GM12878 (cell line): ENCODE measurements at regions of chr16 and their contacts with region 1.

Region 1: GRCh38 chr16:23858542-23858941 is 22.8 kb downstream of the PRKCB start:
- DNase-seq: no peak
- ATAC-seq: no peak
- H3K4me3 ChIP-seq: no peak overlapping the region
- H3K27ac ChIP-seq: peak overlapping the region; percentile 83
- H3K4me1 ChIP-seq: peaks cover 89% of the 10 kb centered on the region
- H3K27me3 ChIP-seq: no peaks in the 10 kb centered on the region
- CTCF ChIP-seq: no peak
- EP300 ChIP-seq: no peak
- POLR2A ChIP-seq: no peak
- RAD21 ChIP-seq: no peak

Region 2: DNA sequence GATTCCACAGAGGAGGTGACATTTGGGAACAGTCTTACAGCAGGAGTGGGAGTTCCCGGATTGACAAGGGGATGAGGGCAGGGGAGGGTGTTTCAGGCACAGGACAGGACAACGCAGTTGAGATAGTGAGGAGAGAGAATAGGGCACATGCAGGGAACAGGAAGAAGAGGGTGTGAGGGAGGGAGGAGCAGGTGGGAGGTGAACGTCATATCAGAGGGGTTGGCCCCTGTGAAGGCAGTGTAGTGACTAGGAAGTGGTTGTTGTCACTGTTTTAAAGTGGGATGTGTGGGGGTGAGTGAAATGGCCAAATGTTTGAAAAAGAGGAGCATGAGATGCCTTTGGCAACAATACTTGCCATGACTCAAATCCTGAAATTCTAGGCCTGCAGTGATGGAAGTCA is 10.6 kb before region 1 on chr16:
- CTCF ChIA-PET with region 1: interaction called, 134 read pairs
- POLR2A ChIA-PET with region 1: interaction called, 79 read pairs
- RAD21 ChIA-PET with region 1: interaction called, 177 read pairs
- SMC1A ChIA-PET with region 1: interaction called, 466 read pairs
- in situ Hi-C with region 1: no loop called
- intact Hi-C with region 1: loop called (anchors 2 kb)
- DNase-seq: no peak
- ATAC-seq: peak; percentile 60
- H3K4me3 ChIP-seq: no peak overlapping the region; the same call in 1 of the 2 replicates
- H3K27ac ChIP-seq: peak overlapping the region; percentile 52
- H3K4me1 ChIP-seq: peaks cover 59% of the 10 kb centered on the region
- H3K27me3 ChIP-seq: no peaks in the 10 kb centered on the region
- CTCF ChIP-seq: no peak
- EP300 ChIP-seq: no peak
- POLR2A ChIP-seq: no peak
- RAD21 ChIP-seq: no peak